ENCODE measurements at regions of chr1 and their contacts with region 1.

Region 1: GRCh38 chr1:27992276-27992675 is 32.5 kb downstream of the XKR8 start:
- DNase-seq: no peak
- ATAC-seq: peak; percentile 64
- H3K4me3 Mint-ChIP-seq: no peak overlapping the region
- H3K27ac Mint-ChIP-seq: peak overlapping the region; percentile 53
- H3K4me1 Mint-ChIP-seq: peaks cover 5% of the 10 kb centered on the region
- H3K27me3 Mint-ChIP-seq: no peaks in the 10 kb centered on the region
- CTCF ChIP-seq: no peak

Region 2: DNA sequence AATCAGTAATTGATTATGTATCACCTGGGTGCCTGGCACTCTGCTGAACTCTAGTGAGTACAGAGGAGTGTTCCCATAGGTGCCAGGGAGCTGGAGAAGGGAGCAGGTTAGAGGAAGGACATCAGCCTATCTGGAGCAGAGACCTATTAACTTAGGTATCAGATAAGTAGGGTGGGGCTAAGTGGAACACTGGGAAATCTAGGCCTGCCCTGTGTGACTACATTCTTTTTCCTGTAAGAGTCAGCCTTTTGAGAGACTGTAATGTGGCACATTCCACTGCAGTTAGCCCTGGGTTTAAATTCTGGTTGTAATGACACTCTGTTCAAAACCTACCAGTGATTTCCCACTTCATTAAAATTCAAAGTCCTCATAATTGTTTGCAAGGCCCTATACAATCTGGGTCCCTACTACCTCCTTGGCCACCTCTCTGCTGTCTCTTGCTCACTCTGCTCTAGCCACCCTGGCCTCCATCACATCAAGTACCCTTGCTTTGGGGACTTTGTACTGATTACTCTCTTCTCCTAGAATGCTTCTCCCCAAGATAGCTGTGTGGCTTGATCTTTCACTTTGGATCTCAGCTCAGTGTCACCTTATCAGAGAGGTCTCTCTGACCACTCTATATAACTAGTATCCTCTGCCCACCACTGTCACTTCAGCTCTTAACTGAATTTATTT is 206.4 kb before region 1 on chr1:
- CTCF ChIA-PET with region 1: no interaction called
- POLR2A ChIA-PET with region 1: no interaction called
- intact Hi-C with region 1: no loop called
- DNase-seq: no peak
- ATAC-seq: no peak
- H3K4me3 Mint-ChIP-seq: no peak overlapping the region
- H3K27ac Mint-ChIP-seq: no peak overlapping the region
- H3K4me1 Mint-ChIP-seq: peaks cover 7% of the 10 kb centered on the region
- H3K27me3 Mint-ChIP-seq: no peaks in the 10 kb centered on the region
- CTCF ChIP-seq: no peak

Region 3: DNA sequence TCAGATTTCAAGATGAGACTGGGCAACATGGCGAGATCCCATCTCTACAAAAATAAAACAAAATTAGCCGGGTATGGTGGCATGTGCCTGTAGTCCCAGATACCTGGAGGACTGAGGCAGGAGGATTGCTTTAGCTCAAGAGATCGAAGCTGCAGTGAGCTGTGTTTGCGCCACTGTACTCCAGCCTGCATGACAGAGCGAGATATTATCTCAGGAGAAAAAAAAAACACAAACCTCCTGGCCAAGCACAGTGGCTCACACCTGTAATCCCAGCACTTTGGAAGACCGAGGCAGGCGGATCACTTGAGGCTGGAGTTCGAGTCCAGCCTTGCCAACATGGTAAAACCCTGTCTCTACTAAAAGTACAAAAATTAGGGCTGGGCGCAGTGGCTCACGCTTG is 10.3 kb after region 1 on chr1:
- CTCF ChIA-PET with region 1: no interaction called
- POLR2A ChIA-PET with region 1: no interaction called
- intact Hi-C with region 1: loop called (anchors 1 kb)
- DNase-seq: no peak
- ATAC-seq: no peak
- H3K4me3 Mint-ChIP-seq: no peak overlapping the region
- H3K27ac Mint-ChIP-seq: no peak overlapping the region
- H3K4me1 Mint-ChIP-seq: no peaks in the 10 kb centered on the region
- H3K27me3 Mint-ChIP-seq: no peaks in the 10 kb centered on the region
- CTCF ChIP-seq: no peak

Measured in activated B cell treated with CpG ODN at 0.5 μM for 24 hours (primary cell).